ENCODE measurements at regions of chr6 and their contacts with region 1.

Region 1: DNA sequence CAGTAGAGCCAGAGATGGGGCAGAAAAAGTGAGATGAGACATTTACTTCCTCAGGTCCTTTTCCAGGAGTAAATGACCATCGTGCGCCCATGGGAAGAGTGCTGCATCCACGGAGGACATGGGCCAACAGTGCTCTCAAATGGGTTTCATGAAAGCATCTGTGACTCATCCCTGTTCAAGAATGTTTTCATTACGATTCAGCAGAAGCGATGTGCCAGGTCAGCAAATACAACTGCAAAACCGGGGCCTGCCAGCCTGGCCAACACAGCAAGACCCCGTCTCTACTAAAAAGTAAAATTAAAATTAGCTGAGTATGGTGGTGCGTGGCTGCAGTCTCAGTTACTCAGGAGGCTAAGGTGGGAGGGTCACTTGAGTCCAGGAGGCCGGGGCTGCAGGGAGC is 125.1 kb downstream of the LY86 start:
- DNase-seq: no peak
- H3K4me3 ChIP-seq: no peak overlapping the region
- H3K27ac ChIP-seq: no peak overlapping the region
- H3K27me3 ChIP-seq: peaks cover 13% of the 10 kb centered on the region
- CTCF ChIP-seq: no peak

Region 2: GRCh38 chr6:6486595-6486994 is 227.1 kb before region 1 on chr6:
- CTCF ChIA-PET with region 1: no interaction called
- POLR2A ChIA-PET with region 1: no interaction called
- DNase-seq: no peak
- H3K4me3 ChIP-seq: no peak overlapping the region
- H3K27ac ChIP-seq: no peak overlapping the region
- H3K27me3 ChIP-seq: no peaks in the 10 kb centered on the region
- CTCF ChIP-seq: no peak

Region 3: DNA sequence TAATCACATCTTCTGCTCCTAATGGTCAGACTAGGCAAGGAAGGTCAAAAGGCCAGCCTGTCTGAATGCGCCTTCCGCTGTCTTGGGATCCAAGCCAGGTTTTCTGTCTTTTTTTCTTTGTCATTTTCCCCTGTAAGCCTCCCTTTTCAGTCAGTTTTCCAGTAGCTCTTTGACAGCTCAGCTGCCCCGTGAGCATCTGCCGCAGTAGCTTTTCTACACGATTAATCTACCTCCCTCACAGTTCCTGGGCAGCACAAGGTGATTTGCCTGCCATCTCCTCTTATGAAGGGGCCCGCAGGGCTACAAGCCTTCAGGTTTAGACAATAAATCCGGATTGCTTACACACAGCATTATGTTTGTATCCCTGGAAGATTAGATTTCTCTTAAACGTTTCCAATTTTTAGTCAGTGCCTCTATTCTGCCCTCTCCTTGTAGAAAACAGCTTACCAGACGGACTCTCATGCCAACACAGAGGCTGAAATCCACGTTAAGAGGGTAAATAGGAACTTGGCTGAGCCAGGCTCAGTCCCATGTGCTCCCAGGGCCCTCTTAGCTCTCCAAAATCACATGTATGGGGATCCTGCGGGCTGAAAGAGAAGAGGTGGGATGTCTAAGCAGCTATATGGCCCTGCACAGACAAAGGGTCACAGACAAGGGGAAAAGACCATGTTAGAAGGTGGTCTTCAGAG is 48.0 kb before region 1 on chr6:
- CTCF ChIA-PET with region 1: no interaction called
- POLR2A ChIA-PET with region 1: no interaction called
- DNase-seq: no peak
- H3K4me3 ChIP-seq: no peak overlapping the region
- H3K27ac ChIP-seq: no peak overlapping the region
- H3K27me3 ChIP-seq: peaks cover 4% of the 10 kb centered on the region
- CTCF ChIP-seq: no peak

Region 4: DNA sequence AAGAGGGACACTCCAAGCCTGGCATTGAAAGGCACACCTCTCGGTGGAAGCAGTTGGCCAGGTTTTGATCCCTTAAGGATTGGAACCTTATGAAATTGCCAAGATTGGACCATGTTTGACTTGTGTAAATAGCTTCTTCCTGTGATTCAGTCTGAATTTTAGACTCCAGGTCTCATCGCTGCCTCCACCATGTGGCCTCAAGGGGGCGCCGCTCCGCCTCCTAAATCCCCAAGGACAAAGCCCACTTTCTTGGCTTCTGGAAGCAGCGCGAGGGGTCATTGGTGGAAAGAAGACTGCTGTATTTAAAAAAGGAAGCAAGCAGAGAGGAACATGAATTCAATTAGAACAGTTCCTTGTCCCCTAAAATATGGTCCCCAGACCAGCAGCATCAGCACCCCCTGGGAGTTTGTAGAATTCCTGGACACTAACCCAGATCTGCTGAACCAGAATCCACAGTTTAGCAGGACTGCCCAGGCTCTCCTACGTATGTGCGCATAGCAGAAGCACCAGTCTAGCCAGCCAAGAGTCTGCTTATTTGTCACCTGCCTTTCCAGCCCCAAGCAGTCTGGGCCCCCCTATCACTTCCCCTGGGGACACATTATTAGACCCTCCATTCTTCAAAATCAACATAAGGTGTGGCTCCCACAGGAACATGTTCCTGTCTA is 16.7 kb before region 1 on chr6:
- CTCF ChIA-PET with region 1: interaction called, 10 read pairs
- POLR2A ChIA-PET with region 1: no interaction called
- DNase-seq: no peak
- H3K4me3 ChIP-seq: no peak overlapping the region
- H3K27ac ChIP-seq: no peak overlapping the region
- H3K27me3 ChIP-seq: peaks cover 11% of the 10 kb centered on the region
- CTCF ChIP-seq: peak; percentile 67

Region 5: DNA sequence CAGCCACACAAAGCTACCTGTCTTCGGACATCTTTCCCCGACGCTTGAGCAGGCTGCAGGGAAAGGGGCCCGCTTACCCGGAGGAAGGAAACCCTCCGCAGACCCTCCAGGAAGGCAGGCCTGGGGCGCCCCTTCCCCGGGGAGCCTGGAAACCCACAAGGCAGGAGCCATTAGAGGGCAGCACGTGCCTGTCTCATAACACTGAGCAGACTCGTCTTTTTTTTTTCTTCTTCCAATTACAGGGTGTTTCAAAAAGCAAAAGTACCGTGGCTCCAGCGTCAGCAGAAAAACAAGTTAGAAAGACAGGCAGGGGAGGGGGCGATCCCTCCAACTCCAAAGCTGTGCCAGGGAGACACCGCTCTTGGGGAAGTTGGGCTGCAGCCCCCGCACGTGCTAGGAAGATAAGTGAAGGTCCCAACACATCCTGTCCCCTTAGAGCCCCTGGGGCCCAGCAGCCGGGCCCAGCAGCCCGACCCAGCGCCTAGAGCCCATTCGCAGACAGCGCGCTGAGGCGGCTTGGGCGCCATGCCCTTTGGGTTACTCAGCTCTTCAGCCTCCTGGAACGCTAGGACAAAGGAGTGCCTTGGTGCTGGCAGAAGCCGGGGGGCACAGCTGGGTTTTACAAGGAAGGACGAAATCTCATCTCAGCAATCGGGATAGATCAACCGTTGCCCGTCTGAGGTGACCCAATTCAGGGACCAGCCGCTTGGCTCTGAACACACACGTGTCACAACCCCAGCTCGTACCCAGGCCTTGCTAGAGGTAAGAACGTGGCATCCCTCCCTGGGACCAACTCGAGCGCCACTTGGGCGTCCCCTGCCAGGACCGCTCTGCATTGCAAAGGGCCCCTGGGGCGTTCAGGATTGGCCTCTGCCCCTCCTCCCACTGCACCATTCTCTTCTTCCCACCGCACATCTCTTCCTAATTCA is 11.1 kb after region 1 on chr6:
- CTCF ChIA-PET with region 1: interaction called, 20 read pairs
- POLR2A ChIA-PET with region 1: interaction called, 6 read pairs
- DNase-seq: peak; percentile 45
- H3K4me3 ChIP-seq: peak overlapping the region; percentile 50
- H3K27ac ChIP-seq: peak overlapping the region; percentile 47
- H3K27me3 ChIP-seq: peaks cover 6% of the 10 kb centered on the region
- CTCF ChIP-seq: peak; percentile 69